Common myeloid progenitor, CD34-positive (primary cell): ENCODE measurements at regions of chr11 and their contacts with region 1.

Region 1: DNA sequence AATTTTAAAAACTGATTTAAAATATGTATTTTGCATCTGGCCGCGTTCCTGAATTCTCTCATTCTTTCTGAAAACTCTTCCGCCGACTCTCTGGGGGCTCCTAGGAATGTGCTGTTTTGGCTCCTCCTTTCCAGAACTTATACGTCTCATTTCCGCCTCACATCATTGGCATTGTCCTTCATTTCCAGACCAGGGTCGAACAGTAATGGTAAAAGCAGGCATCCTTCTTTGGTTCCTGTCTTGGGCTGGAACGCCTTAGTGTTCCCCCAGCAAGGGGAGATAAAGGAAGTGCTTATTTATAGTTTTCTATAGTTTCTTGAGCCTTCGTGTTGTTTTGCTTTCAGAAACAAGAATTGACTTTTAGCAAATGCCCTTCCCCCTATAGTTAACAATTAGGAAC is 10.9 kb upstream of the TNNT3 start:
- DNase-seq: no peak
- H3K4me3 ChIP-seq: peak overlapping the region in 2 of 7 experiments; percentile 4 to 30
- H3K27ac ChIP-seq: peak overlapping the region in 1 of 2 experiments; percentile 47
- H3K4me1 ChIP-seq: peaks cover 8 to 44% (median 37%) of the 10 kb centered on the region in 4 experiments
- H3K27me3 ChIP-seq: no peaks in the 10 kb centered on the region

Region 2: DNA sequence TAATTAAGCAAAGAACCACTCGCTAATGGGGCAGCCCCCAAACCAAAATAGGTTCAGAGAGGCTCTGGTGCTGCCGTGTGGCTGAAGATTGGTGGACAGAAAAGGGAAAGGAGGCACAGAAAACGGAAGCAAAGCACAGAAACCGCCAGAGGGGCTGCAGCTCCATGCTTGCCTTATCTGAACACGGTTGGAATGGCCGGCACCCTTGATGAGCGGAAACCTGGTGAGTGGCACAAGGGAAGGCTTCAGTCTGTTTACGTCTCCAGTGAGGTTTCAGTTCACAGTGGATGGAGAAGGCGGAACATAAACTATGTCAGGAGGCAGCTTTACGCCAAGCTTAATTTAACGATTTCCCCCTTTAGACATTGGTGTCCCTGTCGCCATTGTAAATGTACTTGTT is 11.7 kb before region 1 on chr11:
- CTCF ChIA-PET with region 1: interaction called, 31 read pairs
- POLR2A ChIA-PET with region 1: interaction called, 3 read pairs
- DNase-seq: peak; percentile 76 to 92 (median 88)
- H3K4me3 ChIP-seq: peak overlapping the region in 5 of 7 experiments; percentile 30 to 71 (median 56)
- H3K27ac ChIP-seq: peak overlapping the region; percentile 73 to 77
- H3K4me1 ChIP-seq: peaks cover 10 to 59% (median 33%) of the 10 kb centered on the region in 4 experiments
- H3K27me3 ChIP-seq: no peaks in the 10 kb centered on the region

Region 3: GRCh38 chr11:1931341-1932099 is 22.9 kb after region 1 on chr11:
- CTCF ChIA-PET with region 1: interaction called, 17 read pairs
- POLR2A ChIA-PET with region 1: interaction called, 3 read pairs
- DNase-seq: peak; percentile 21 to 63 (median 51)
- H3K4me3 ChIP-seq: peak overlapping the region in 3 of 7 experiments; percentile 35 to 63 (median 41)
- H3K27ac ChIP-seq: peak overlapping the region in 1 of 2 experiments; percentile 75
- H3K4me1 ChIP-seq: peaks cover 2 to 64% (median 33%) of the 10 kb centered on the region in 4 experiments
- H3K27me3 ChIP-seq: no peaks in the 10 kb centered on the region